AG04449 (cell line): ENCODE measurements at regions of chr6 and their contacts with region 1.

Region 1: DNA sequence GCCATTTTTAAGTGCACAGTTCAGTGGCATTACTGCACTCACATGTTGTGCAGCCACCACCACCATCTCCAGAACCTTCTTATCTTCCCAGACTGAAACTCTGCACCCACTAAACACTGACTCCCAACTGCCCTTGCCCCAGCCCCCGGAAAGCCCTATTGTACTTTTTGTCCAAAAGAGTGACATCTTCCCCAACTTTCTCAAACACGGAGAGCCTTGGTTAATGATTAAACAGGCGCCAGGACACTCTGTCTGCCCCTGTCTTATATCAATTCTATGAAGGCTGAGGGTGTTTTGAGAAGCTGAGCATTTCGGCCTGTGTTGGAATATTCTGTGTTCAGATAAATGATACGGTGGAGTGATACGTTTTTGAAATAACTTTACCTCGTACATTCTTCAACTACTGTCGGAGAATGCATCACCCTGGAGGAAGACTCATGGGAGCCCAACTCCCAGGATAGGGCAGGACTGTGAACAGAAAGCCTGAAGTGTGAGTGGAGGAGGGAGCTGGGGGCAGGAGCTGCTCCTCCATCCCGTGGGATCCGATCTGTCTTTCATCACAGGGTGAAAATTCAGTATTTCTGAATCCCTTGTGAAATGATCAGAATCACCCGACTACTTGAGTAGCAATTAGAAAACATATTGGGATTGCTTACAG is 68.7 kb upstream of the FOXC1 start:
- DNase-seq: no peak
- H3K4me3 ChIP-seq: no peak overlapping the region
- CTCF ChIP-seq: no peak

Region 2: DNA sequence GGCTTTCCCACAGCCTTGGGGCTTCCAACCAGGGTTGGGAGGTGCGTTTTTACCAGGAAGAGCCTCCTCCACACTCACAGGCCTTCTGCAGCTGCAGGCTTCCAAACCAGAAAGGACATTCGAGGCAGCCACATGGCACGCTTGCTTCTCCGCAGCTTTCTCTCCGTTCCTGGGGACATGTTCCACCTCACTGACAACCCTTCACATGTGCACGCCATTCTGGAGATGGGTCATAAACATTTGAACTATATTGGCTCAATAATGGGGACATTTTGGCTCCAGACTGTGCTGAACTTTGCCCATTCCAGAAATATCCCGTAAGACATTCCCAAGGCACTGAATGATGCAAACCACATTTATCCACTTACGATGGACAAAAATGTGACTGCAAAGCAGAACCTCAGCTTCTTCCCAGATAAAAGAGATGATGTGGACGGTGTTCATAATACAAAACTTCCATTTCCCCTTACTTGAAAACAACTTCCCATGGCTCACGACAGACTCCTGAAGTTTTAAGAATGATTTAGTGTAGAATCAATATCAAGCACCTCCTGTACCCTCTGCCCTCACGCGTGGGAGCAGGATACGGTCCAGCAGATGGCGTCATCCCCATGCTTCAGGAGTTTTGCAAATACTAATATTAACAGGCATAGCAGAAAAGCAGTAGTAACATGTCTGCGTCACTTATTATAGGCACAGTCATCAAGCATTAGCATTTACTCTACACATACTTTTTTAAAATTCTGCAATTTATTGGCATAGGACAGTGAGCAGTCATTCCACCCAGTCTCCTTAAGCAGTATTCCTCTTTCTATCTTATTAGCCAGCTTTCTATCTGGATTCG is 177.0 kb before region 1 on chr6:
- CTCF ChIA-PET with region 1: no interaction called
- POLR2A ChIA-PET with region 1: no interaction called
- DNase-seq: no peak
- H3K4me3 ChIP-seq: no peak overlapping the region
- CTCF ChIP-seq: no peak

Region 3: DNA sequence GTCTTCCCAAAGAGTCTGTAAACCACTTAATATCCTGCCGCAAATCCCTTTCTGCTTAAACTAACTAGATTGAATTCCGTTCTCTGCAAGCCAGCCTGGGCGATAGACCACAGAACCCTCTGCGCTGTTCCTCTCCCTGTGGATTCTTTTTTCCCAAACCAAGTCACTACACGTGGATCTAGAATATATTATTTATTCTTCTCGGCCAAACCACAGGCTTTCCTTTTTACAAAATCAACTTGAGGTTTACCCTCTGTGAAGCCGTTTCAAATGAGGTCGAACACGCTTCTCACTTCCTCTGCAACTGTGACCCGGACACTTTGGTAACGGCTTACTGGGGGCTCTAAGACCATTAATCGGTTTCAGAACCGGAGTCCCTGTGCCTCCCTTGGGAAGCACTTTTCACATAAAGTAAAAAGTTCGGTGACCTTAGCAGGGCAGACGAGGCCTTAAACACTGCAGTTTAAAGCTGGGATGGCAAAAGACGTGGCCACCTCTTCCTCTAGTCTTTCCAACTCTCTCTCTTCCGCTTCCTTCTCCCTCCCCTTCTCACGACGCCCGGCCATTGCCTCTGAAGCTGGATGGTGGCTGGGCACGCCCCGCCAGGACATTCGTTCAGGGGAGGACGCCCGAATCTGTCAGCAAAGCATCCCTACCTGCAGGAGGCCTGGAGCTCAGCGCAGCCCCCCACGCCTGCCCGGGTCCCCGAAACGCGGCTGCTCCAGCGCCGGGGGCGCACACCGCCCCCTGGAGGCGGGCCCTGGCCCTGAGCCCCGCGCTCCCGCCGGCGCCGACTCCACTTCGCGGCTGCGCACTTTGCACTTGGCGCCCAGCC is 13.7 kb after region 1 on chr6:
- CTCF ChIA-PET with region 1: interaction called, 20 read pairs
- POLR2A ChIA-PET with region 1: no interaction called
- DNase-seq: no peak
- H3K4me3 ChIP-seq: peak overlapping the region; percentile 65
- CTCF ChIP-seq: peak; percentile 72